Adrenal gland (tissue), 19 donors: ENCODE measurements at regions of chr12 and their contacts with region 1.

Region 1: GRCh38 chr12:3202734-3203446 is 125.7 kb downstream of the TSPAN9 start:
- DNase-seq: peak; percentile 40 to 75 (median 61)
- H3K4me3 ChIP-seq: no peak overlapping the region
- H3K27ac ChIP-seq: no peak overlapping the region
- H3K4me1 ChIP-seq: peaks cover 16 to 24% of the 10 kb centered on the region in 2 donors
- H3K27me3 ChIP-seq: no peaks in the 10 kb centered on the region
- CTCF ChIP-seq: peak; percentile 75 to 94 (median 90)
- POLR2A ChIP-seq: no peak

Region 2: GRCh38 chr12:3073438-3074250 is 129.2 kb before region 1 on chr12:
- intact Hi-C with region 1: loop called in 1 of 2 experiments (anchors 5 kb)
- DNase-seq: peak; percentile 79 to 95 (median 85)
- H3K4me3 ChIP-seq: no peak overlapping the region
- H3K27ac ChIP-seq: peak overlapping the region in 1 of 5 donors; percentile 17
- H3K4me1 ChIP-seq: peaks cover 5 to 16% of the 10 kb centered on the region in 2 donors
- H3K27me3 ChIP-seq: no peaks in the 10 kb centered on the region
- CTCF ChIP-seq: peak; percentile 93 to 99 (median 96)
- POLR2A ChIP-seq: no peak

Region 3: GRCh38 chr12:3135522-3136461 is 67.1 kb before region 1 on chr12:
- intact Hi-C with region 1: loop called (anchors 5 kb)
- DNase-seq: peak; percentile 28 to 76 (median 47)
- H3K4me3 ChIP-seq: no peak overlapping the region
- H3K27ac ChIP-seq: no peak overlapping the region
- H3K4me1 ChIP-seq: peaks cover 0 to under 1% of the 10 kb centered on the region in 2 donors
- H3K27me3 ChIP-seq: no peaks in the 10 kb centered on the region
- CTCF ChIP-seq: peak; percentile 68 to 89 (median 81)
- POLR2A ChIP-seq: no peak

Region 4: GRCh38 chr12:3252450-3252891 is 49.6 kb after region 1 on chr12:
- intact Hi-C with region 1: no loop called
- DNase-seq: peak; percentile 22 to 81 (median 53)
- H3K4me3 ChIP-seq: no peak overlapping the region
- H3K27ac ChIP-seq: peak overlapping the region in 1 of 5 donors; percentile 61
- H3K4me1 ChIP-seq: peaks cover 0 to 4% of the 10 kb centered on the region in 2 donors
- H3K27me3 ChIP-seq: no peaks in the 10 kb centered on the region
- CTCF ChIP-seq: no peak
- POLR2A ChIP-seq: no peak